ENCODE measurements at regions of chr16 and their contacts with region 1.

Region 1: GRCh38 chr16:4957720-4958509 is at the start of gene SEC14L5:
- DNase-seq: peak; percentile 98 to 99 (median 99)
- ATAC-seq: peak; percentile 97 to 98
- H3K4me3 ChIP-seq: peak within 1 kb of the TSS; percentile 55
- H3K27ac ChIP-seq: peak within 1 kb of the TSS; percentile 33
- H3K4me1 ChIP-seq: no peaks in the 10 kb centered on the region
- H3K27me3 ChIP-seq: no peaks in the 10 kb centered on the region
- total RNA-seq, gene SEC14L5: 0.57 to 3.8 (median 2.1) TPM

Region 2: GRCh38 chr16:4693296-4693955 is 264.5 kb before region 1 on chr16 and contains the start of gene NUDT16L1:
- intact Hi-C with region 1: loop called in 1 of 4 experiments (anchors 10 kb)
- DNase-seq: peak; percentile 97 to 99 (median 99)
- ATAC-seq: peak; percentile 89 to 90
- H3K4me3 ChIP-seq: peak within 1 kb of the TSS; percentile 65
- H3K27ac ChIP-seq: peak within 1 kb of the TSS; percentile 36
- H3K4me1 ChIP-seq: peaks cover 7% of the 10 kb centered on the region
- H3K27me3 ChIP-seq: no peaks in the 10 kb centered on the region
- total RNA-seq, gene NUDT16L1: 30.5 to 55.2 (median 42.5) TPM

Region 3: DNA sequence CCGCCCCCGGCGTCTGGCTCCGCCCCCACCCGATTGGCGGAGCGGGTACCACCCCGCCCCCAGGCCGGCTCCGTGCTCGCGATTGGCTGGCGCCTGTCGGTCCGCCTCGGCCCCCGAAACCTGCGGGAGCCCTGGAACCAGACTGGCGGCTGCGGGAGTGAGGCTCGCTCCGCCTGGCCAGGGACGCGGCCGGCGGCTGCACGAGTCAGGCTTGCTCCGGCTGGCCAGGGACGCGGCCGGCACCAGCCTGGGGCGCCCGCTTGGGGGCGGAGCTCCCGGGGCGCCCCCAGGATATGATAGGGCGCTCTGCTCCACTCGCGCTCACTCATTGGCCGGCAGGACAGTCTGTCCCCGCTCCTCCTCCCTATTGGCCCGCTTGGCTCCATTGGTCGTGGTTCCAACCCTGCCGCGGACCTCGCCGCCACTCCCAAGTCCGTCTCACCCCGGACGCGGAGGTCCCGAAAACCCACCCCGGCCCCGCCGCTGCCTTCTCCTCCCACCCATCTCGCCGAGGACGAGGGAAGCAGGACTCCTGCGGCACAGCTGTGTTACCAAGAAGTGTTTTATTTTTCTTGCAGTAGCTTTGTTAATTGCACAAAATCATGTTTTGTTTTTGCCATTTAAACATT is 155.1 kb before region 1 on chr16:
- intact Hi-C with region 1: loop called in 1 of 4 experiments (anchors 10 kb)
- DNase-seq: peak; percentile 94 to 97 (median 97)
- ATAC-seq: peak; percentile 95 to 96
- H3K4me3 ChIP-seq: peak overlapping the region; percentile 66
- H3K27ac ChIP-seq: peak overlapping the region; percentile 64
- H3K4me1 ChIP-seq: no peaks in the 10 kb centered on the region
- H3K27me3 ChIP-seq: no peaks in the 10 kb centered on the region

Region 4: DNA sequence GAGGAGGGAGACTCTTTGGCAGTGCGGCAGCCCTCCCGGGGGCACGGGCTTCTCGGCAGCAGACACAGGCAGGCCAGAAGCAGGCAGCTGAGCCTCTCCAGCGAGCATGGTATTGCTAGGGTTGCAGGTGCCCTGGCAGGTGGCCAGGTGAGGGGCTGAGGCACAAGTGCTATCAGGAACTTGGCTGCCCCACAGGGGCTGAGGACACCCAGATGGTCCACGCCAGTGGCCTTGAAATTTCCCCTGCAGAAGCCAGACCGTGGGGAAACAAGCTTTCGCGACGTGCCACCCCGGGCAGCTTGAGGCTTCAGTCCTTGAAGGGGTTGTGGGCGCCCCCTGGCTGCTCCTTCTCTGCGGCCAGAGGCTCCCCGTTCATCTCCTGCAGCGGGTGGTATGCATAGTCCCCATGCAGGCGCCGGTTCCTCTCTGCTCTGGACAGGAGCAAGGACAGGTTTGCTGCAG is 67.3 kb after region 1 on chr16:
- intact Hi-C with region 1: loop called in 1 of 4 experiments (anchors 5 kb)
- DNase-seq: peak in 2 of 3 donors; percentile 76
- ATAC-seq: peak; percentile 17 to 25
- H3K4me3 ChIP-seq: no peak overlapping the region
- H3K27ac ChIP-seq: no peak overlapping the region
- H3K4me1 ChIP-seq: no peaks in the 10 kb centered on the region
- H3K27me3 ChIP-seq: no peaks in the 10 kb centered on the region

Measured in right cardiac atrium (tissue), 5 donors.